PC-9 (cell line): ENCODE measurements at regions of chr9 and their contacts with region 1.

Region 1: DNA sequence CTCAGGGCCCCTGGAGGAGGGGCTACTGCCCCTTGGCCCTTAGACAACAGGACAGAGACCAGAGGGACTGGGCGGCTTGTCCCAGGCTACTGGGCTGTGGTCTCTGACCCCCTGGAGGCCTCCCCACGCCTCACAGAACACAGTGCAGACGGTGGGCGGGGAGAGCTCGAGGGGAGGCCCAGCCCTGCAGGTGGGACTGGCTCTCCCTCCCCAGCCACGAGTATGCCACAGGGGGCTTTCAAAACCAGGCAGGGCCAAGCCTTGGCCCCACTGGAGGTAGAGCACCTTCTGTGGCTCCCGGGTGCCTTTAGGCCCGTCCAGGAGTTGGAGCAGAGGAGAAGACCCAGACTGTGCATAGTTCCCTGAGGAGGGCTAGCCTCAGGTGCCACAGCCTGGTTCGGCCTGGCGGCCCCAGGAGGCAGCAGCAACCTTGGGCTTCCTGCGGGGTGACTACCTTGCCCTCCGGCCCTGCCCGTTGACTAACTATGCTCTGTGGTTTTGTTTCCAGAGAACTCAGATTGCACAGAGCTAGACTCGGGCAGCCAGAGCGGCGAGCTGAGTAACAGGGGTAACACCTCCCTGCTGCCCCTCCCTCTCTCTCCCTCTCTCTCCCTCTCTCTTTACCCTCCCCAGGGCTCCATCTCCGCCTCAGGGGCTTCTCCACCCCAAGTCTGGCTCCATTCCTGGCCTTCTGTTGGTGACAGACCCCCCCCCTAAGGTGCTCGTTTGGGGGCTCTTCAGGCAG is 15.5 kb downstream of the CARD19 start:
- DNase-seq: peak; percentile 96 to 97
- H3K4me3 ChIP-seq: peak overlapping the region; percentile 9; the same call in 1 of the 2 replicates
- H3K27ac ChIP-seq: peak overlapping the region; percentile 97
- H3K4me1 ChIP-seq: peaks cover 82% of the 10 kb centered on the region
- H3K27me3 ChIP-seq: no peaks in the 10 kb centered on the region
- CTCF ChIP-seq: no peak

Region 2: DNA sequence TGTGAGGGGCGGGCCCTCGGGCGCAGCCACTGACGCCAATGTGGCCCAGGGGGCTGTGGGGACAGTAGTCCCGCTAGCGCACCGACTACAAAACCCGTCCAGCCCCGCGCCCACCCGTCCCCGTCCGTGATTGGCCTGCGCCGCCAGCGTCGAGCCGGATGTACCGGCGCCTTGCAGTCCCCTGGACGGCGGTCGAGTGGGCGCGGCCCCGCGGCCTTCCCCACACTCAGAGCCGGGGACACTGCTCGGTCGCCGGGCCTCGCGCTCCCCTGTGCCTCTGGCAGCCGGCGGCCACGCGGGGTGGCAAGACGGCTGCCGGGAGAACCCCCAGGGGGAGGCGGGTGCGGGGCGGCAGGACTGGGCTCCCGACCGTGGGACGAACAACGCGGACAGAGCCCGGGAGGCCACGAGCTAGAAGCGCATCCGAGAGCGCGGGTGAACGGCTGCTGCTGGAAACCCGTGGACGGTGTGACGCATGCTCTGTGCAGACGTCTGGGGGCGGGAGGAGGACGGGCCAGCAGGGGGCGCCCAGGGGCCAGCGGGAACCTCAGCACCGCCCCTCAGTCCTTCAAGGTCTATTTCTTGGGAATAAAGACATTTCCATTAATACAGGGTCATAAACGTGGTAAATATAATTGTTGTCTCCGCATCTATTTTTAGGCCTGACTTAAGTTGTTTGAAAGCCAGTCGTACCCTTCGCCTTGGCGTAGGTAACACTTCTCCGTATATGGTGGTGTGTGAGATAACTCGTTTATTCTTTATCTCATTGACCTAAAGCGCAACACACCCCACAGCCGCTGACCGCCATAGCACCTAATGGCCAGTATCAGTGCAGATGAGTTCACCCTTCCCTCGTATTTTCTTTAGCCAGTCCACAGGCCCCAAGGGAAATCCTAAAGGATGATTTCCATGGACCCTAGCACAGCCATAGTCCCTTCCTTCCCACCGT is 346.3 kb before region 1 on chr9:
- CTCF ChIA-PET with region 1: no interaction called
- POLR2A ChIA-PET with region 1: no interaction called
- intact Hi-C with region 1: loop called (anchors 5 kb)
- DNase-seq: peak; percentile 89 to 99
- H3K4me3 ChIP-seq: peak overlapping the region; percentile 67
- H3K27ac ChIP-seq: peak overlapping the region; percentile 90
- H3K4me1 ChIP-seq: peaks cover 16% of the 10 kb centered on the region
- H3K27me3 ChIP-seq: no peaks in the 10 kb centered on the region
- CTCF ChIP-seq: peak; percentile 95

Region 3: GRCh38 chr9:92837191-92837590 is 274.4 kb before region 1 on chr9:
- CTCF ChIA-PET with region 1: no interaction called
- POLR2A ChIA-PET with region 1: no interaction called
- intact Hi-C with region 1: no loop called
- DNase-seq: no peak
- H3K4me3 ChIP-seq: no peak overlapping the region
- H3K27ac ChIP-seq: no peak overlapping the region
- H3K4me1 ChIP-seq: no peaks in the 10 kb centered on the region
- H3K27me3 ChIP-seq: no peaks in the 10 kb centered on the region
- CTCF ChIP-seq: no peak

Region 4: DNA sequence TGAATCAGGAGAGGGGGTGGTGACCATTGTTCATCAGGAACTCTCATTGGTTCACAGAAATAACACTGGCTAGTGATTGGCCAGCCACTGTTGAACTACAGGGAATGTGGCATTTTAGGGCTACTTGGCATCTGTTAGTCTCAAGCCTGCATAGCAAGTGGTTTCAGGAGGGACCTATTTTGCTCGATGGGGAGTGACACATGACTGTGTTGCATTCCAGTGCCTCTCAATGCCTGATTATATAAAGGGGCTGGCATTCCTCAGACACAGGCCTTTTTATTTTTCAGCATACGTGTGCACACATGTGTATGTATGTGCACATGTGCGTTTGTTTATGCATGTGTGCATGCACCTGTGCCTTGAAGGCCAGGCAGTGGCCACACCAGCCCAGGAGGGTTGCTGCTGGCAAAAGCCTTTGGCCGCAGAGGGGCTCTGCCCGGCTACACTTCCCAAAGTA is 141.0 kb before region 1 on chr9:
- CTCF ChIA-PET with region 1: no interaction called
- POLR2A ChIA-PET with region 1: interaction called, 19 read pairs
- intact Hi-C with region 1: loop called (anchors 5 kb)
- DNase-seq: peak; percentile 76 to 85
- H3K4me3 ChIP-seq: no peak overlapping the region
- H3K27ac ChIP-seq: peak overlapping the region; percentile 30; the same call in 1 of the 2 replicates
- H3K4me1 ChIP-seq: peaks cover 54% of the 10 kb centered on the region
- H3K27me3 ChIP-seq: no peaks in the 10 kb centered on the region
- CTCF ChIP-seq: no peak

Region 5: DNA sequence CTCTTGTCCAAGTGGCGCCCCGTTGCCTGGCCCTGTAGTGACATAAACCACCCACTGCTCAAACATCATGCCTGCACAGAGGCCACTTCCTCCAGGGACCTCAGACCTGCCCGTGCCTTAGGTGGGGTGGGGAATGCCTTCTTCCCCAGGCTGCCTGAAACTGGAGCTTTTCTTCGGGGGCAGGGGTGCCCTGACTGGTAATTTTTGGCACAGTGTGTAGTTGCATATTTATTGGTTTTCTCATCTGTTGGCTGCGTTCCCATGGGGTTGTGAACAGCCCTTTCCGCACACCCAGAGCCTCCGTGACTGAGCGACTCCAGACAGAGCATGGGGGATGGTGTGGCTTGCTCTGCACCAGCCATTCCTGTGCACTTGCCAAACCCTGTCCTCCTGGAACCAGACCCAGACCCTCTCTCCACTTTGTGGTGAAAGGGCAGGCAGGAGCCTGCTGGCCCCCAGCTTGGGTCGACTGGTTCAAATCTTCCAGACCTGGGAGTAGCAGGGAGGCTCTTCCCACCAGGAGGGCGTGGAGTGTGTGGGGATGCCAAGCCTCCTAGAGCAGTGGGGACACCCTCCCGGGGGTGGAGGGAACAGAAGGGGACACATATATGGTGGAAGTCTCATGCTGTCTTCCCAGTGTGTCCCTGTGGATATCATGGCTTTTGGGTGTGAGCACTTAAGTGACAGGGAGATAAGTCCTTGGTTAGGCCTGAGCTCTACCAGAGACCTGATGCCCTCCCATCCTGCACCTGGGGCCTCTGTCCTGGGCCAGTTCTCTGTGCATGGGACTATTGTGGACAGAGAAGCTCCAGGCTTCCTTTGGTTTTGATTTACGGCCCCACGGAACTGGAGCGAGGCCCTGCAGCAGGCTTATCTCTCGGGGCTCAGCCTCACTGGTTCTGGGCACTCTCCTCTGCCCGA is 112.0 kb after region 1 on chr9:
- CTCF ChIA-PET with region 1: interaction called, 9 read pairs
- POLR2A ChIA-PET with region 1: no interaction called
- intact Hi-C with region 1: loop called (anchors 1 kb)
- DNase-seq: peak; percentile 97
- H3K4me3 ChIP-seq: peak overlapping the region; percentile 30; the same call in 1 of the 2 replicates
- H3K27ac ChIP-seq: peak overlapping the region; percentile 78
- H3K4me1 ChIP-seq: peaks cover 54% of the 10 kb centered on the region
- H3K27me3 ChIP-seq: no peaks in the 10 kb centered on the region
- CTCF ChIP-seq: no peak

Region 6: DNA sequence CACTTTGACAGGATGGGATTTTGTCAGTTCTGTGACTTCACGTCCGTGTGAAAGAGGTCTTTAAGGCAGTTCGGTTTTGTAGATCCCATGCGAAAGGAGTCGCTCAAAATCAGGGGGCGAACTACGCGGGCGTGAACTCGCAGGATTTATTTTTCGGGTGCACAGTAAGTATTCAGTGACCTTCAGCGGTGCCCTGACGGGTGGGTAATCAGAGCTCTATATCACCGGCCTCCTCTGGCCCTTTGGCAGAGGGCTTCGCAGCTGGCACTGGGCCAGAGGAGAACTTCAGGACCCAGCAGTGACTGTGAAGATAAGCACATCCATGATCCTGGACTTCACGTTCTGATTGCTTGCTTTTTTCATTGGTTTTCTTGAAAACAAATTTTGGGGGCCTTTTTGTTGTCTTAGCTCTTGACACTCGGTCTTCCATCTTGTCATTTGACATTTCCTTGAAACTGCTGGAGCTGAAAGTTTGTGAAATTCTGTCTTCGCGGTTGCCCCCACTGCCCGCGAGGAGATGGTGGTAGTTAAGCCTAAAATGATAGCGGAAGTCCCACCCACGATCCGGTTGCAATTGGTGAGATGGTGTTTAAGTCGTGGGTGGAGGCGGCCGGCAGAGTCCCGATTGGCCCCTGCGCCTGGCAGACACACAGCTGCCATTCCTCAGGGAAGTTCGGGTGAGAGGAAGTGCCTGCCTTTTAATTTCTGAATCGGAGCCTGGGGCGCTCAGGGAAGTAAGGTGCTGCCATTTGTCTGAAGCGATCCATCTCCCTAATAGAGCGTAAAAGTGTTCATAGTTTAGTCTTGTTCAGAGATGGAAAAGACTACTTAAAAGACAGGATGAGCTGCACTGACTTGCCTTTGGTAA is 341.7 kb after region 1 on chr9 and contains the start of gene FAM120AOS:
- CTCF ChIA-PET with region 1: no interaction called
- POLR2A ChIA-PET with region 1: no interaction called
- intact Hi-C with region 1: loop called (anchors 5 kb)
- DNase-seq: peak; percentile 93 to 94
- H3K4me3 ChIP-seq: peak within 1 kb of the TSS; percentile 74
- H3K27ac ChIP-seq: peak within 1 kb of the TSS; percentile 42
- H3K4me1 ChIP-seq: peaks cover 31% of the 10 kb centered on the region
- H3K27me3 ChIP-seq: no peaks in the 10 kb centered on the region
- CTCF ChIP-seq: no peak
- total RNA-seq, gene FAM120AOS: 27.8 and 34.6 TPM in 2 replicates

Region 7: GRCh38 chr9:93480728-93481324 is 369.3 kb after region 1 on chr9:
- CTCF ChIA-PET with region 1: no interaction called
- POLR2A ChIA-PET with region 1: no interaction called
- intact Hi-C with region 1: no loop called
- DNase-seq: no peak
- H3K4me3 ChIP-seq: no peak overlapping the region
- H3K27ac ChIP-seq: no peak overlapping the region
- H3K4me1 ChIP-seq: peaks cover 3% of the 10 kb centered on the region; the same call in 1 of the 2 replicates
- H3K27me3 ChIP-seq: no peaks in the 10 kb centered on the region
- CTCF ChIP-seq: no peak